MCF 10A (cell line): ENCODE measurements at regions of chr12 and their contacts with region 1.

Region 1: DNA sequence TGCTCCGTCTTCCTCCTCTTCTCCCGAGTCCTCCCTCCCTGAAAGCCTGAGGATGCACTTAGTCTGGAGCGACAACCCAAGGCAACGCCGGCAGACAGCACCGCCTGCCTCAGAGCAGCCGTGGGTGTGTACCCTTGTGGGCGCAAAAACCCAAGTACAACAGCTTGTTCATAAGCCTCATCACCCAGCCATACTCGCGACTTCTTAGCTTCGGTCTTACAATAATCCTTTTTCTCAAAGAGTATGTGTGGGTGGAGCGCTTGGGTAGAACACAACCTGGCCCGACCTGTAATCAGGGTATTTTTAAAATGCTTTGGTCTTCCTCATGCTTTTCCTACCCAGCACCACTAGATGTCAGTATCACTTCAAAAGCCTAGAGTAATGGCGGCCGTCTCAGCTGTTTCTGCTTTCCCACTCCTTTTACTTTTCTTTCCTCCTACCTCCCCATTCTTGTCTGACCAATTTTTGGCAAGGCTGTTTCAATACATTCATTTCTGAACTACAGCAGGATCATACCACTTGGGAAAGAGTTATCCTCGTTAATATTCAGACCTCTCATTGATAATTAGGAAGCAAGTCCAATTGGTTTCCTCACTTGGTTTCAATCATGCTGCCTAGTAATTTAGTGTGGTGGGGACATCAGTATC is 198.9 kb downstream of the EPS8 start:
- DNase-seq: peak; percentile 79
- H3K4me3 Mint-ChIP-seq: peak overlapping the region; percentile 72
- H3K27ac Mint-ChIP-seq: peak overlapping the region; percentile 95
- H3K4me1 Mint-ChIP-seq: peaks cover 10% of the 10 kb centered on the region
- H3K27me3 Mint-ChIP-seq: no peaks in the 10 kb centered on the region
- CTCF ChIP-seq: peak; percentile 82

Region 2: DNA sequence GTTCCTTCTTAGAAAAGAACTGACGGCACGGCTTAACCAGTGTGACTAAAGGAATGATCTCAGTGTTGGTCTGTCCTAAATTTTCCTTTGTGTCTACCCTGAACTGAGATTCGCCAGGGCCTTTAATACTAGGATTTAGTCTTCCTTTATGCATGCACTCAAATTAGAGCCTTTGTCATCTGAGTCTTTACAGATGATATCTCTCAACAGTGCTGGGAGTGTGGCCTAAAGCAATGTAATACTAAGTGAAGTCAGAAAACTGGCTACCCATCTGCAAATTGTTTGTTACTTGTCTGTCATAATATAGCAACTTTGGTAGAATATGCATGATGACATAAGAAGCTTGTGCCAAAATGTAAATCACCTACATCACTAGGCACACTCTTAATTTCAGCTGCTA is 172.6 kb before region 1 on chr12:
- CTCF ChIA-PET with region 1: no interaction called
- POLR2A ChIA-PET with region 1: no interaction called
- intact Hi-C with region 1: no loop called
- DNase-seq: no peak
- H3K4me3 Mint-ChIP-seq: no peak overlapping the region
- H3K27ac Mint-ChIP-seq: no peak overlapping the region
- H3K4me1 Mint-ChIP-seq: peaks cover 13% of the 10 kb centered on the region
- H3K27me3 Mint-ChIP-seq: no peaks in the 10 kb centered on the region
- CTCF ChIP-seq: no peak

Region 3: GRCh38 chr12:15550793-15551192 is 39.5 kb before region 1 on chr12:
- CTCF ChIA-PET with region 1: interaction called, 11 read pairs
- POLR2A ChIA-PET with region 1: no interaction called
- intact Hi-C with region 1: no loop called
- DNase-seq: no peak
- H3K4me3 Mint-ChIP-seq: no peak overlapping the region
- H3K27ac Mint-ChIP-seq: no peak overlapping the region
- H3K4me1 Mint-ChIP-seq: no peaks in the 10 kb centered on the region
- H3K27me3 Mint-ChIP-seq: no peaks in the 10 kb centered on the region
- CTCF ChIP-seq: no peak

Region 4: DNA sequence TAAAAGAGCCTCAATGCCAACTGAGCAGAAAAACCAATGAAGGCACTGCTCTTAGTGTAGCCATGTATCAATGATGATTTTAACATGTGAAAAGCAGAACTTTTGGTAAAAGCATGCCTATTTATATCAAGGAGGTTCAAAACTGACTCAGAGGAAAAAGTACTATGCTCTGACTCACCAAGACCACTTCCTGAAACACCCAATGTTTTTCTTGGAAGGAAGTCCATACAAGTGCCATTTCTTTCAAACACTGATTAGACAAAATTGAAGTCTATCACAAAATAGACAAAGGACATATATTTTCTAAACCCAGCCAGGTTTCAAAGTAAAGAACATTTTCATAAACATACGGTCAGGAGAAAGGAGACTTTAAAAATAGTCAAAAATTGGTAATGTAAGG is 110.3 kb after region 1 on chr12:
- CTCF ChIA-PET with region 1: no interaction called
- POLR2A ChIA-PET with region 1: no interaction called
- intact Hi-C with region 1: loop called (anchors 10 kb)
- DNase-seq: peak; percentile 85
- H3K4me3 Mint-ChIP-seq: peak overlapping the region; percentile 13
- H3K27ac Mint-ChIP-seq: peak overlapping the region; percentile 96
- H3K4me1 Mint-ChIP-seq: peaks cover 49% of the 10 kb centered on the region
- H3K27me3 Mint-ChIP-seq: no peaks in the 10 kb centered on the region
- CTCF ChIP-seq: no peak

Region 5: GRCh38 chr12:15842108-15842507 is 251.8 kb after region 1 on chr12:
- CTCF ChIA-PET with region 1: interaction called, 14 read pairs
- POLR2A ChIA-PET with region 1: no interaction called
- intact Hi-C with region 1: no loop called
- DNase-seq: peak; percentile 68
- H3K4me3 Mint-ChIP-seq: no peak overlapping the region
- H3K27ac Mint-ChIP-seq: no peak overlapping the region
- H3K4me1 Mint-ChIP-seq: peaks cover 12% of the 10 kb centered on the region
- H3K27me3 Mint-ChIP-seq: no peaks in the 10 kb centered on the region
- CTCF ChIP-seq: no peak

Region 6: GRCh38 chr12:15856097-15856982 is 266.0 kb after region 1 on chr12:
- CTCF ChIA-PET with region 1: interaction called, 222 read pairs
- POLR2A ChIA-PET with region 1: interaction called, 15 read pairs
- intact Hi-C with region 1: loop called (anchors 1 kb)
- DNase-seq: peak; percentile 76
- H3K4me3 Mint-ChIP-seq: no peak overlapping the region
- H3K27ac Mint-ChIP-seq: peak overlapping the region; percentile 75
- H3K4me1 Mint-ChIP-seq: peaks cover 26% of the 10 kb centered on the region
- H3K27me3 Mint-ChIP-seq: no peaks in the 10 kb centered on the region
- CTCF ChIP-seq: peak; percentile 82